Panc1 (cell line): ENCODE measurements at regions of chr3 and their contacts with region 1.

Region 1: DNA sequence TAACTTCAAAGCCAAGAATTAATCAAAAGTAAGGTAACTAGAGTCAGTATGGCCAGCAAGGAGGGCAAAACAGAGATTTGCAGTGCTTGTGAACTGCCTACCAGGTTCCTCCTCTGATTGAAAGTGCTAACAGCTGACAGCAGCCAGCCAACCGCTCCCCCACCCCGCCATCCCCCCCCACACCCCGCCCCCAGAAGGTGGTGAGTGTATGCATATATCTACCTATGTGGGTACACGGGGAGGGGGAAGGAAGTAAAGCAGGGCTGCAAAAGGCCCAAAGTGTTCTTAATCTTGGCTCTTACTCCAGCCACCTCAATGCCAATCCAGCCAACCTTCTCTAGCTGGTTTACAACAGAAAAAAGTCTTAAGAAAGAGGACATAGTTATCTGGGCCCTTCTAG is 50.7 kb downstream of the RAF1 start:
- DNase-seq: no peak
- ATAC-seq: no peak
- H3K4me3 ChIP-seq: no peak overlapping the region
- H3K27ac ChIP-seq: no peak overlapping the region
- H3K4me1 ChIP-seq: no peaks in the 10 kb centered on the region
- H3K27me3 ChIP-seq: no peaks in the 10 kb centered on the region
- CTCF ChIP-seq: no peak

Region 2: DNA sequence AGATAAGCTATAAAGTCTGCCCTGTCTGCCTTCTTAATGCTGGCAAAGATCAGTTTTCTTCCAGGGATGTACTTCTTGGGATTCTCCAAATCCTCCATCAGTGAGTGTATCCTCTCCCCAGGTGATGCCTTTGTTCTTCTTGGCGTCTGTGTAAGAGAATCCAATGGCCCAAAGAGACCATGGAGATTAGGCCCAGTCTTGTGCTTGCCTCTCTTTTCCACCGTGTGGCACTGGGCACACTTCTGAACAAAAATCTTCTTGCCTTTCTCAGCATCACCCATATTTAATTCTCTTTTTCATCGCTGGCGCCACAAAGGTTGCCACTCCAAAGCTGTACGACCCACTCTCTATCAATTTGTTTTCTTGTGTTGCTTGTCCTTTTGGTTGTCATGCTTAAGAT is 734.4 kb before region 1 on chr3:
- CTCF ChIA-PET with region 1: no interaction called
- POLR2A ChIA-PET with region 1: no interaction called
- in situ Hi-C with region 1: no loop called
- intact Hi-C with region 1: loop called (anchors 10 kb)
- DNase-seq: no peak
- ATAC-seq: no peak
- H3K4me3 ChIP-seq: no peak overlapping the region
- H3K27ac ChIP-seq: no peak overlapping the region
- H3K4me1 ChIP-seq: no peaks in the 10 kb centered on the region
- H3K27me3 ChIP-seq: no peaks in the 10 kb centered on the region
- CTCF ChIP-seq: no peak

Region 3: GRCh38 chr3:12648384-12648959 is 35.2 kb after region 1 on chr3:
- CTCF ChIA-PET with region 1: no interaction called
- POLR2A ChIA-PET with region 1: no interaction called
- in situ Hi-C with region 1: no loop called
- intact Hi-C with region 1: no loop called
- DNase-seq: no peak
- ATAC-seq: no peak
- H3K4me3 ChIP-seq: no peak overlapping the region
- H3K27ac ChIP-seq: no peak overlapping the region
- H3K4me1 ChIP-seq: no peaks in the 10 kb centered on the region; the same call in 1 of the 2 replicates
- H3K27me3 ChIP-seq: no peaks in the 10 kb centered on the region
- CTCF ChIP-seq: no peak